Breast epithelium (tissue), 4 donors: ENCODE measurements at regions of chr1 and their contacts with region 1.

Region 1: DNA sequence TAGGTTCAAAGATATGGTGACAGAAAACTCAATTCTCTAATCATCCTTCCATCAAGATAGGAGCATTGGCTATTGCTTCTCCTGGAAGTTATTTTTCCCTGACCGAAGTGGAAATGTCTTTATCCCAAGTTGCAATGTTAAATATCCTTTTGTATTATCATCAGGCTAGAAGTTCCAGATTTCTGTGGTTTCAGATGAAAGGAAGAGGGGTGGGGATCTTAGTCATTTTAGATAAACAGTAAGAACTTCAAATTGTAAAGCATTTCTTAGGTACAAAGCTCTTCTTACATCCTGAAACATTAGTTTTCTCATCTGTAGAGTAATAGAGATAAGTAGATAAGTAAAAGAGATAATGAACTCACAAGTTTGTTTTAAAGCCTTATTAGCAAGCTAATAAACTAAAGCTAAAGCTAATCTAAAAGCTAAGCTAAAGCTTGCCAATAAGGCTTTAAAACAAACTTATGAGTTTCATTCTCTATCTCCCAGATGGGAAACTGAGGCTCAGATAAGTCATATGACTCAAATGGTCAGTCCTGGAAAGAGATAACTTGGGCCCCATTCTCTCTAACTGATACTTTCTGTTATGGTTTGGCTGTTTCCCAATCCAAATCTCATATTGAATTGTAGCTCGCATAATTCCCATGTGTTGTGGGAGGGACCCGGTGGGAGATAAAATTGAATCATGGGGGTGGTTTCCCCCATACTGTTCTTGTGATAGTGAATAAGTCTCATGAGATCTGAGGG is 99.2 kb upstream of the KCNK2 start:
- DNase-seq: no peak
- H3K4me3 ChIP-seq: no peak overlapping the region
- H3K27ac ChIP-seq: no peak overlapping the region
- H3K4me1 ChIP-seq: no peaks in the 10 kb centered on the region
- H3K27me3 ChIP-seq: no peaks in the 10 kb centered on the region
- CTCF ChIP-seq: no peak
- POLR2A ChIP-seq: no peak

Region 2: DNA sequence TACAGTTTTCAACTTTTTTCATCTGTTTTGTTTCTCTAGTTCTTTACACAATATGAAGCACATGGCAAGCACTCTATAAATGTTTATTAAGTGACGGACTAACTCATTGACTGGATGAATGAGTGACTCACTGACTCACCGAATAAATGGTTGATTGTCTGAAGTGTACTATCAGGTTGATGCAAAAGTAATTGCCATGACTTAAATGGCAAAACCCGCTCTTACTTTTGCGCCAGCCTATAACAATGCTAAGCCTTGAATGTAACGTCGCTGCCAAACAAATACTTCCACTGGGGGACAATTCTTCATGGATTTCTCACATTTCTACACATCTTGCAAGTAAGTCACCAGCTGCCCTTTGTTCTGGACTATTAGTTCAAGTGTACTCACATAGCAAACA is 474.8 kb after region 1 on chr1:
- intact Hi-C with region 1: loop called (anchors 5 kb)
- DNase-seq: no peak
- H3K4me3 ChIP-seq: no peak overlapping the region
- H3K27ac ChIP-seq: no peak overlapping the region
- H3K4me1 ChIP-seq: no peaks in the 10 kb centered on the region
- H3K27me3 ChIP-seq: no peaks in the 10 kb centered on the region
- CTCF ChIP-seq: no peak
- POLR2A ChIP-seq: no peak